CD8-positive, alpha-beta T cell (primary cell): ENCODE measurements at regions of chr11 and their contacts with region 1.

Region 1: GRCh38 chr11:12893787-12894672 is 115.1 kb upstream of the RASSF10 start:
- DNase-seq: peak in 8 of 9 experiments; percentile 13 to 55 (median 46)
- ATAC-seq: no peak
- H3K4me3 ChIP-seq: no peak overlapping the region
- H3K4me3 Mint-ChIP-seq: no peak overlapping the region
- H3K27ac ChIP-seq: no peak overlapping the region
- H3K27ac Mint-ChIP-seq: no peak overlapping the region
- H3K4me1 ChIP-seq: no peaks in the 10 kb centered on the region
- H3K4me1 Mint-ChIP-seq: no peaks in the 10 kb centered on the region
- H3K27me3 ChIP-seq: no peaks in the 10 kb centered on the region
- H3K27me3 Mint-ChIP-seq: peaks cover 15% of the 10 kb centered on the region
- CTCF ChIP-seq: peak; percentile 78

Region 2: DNA sequence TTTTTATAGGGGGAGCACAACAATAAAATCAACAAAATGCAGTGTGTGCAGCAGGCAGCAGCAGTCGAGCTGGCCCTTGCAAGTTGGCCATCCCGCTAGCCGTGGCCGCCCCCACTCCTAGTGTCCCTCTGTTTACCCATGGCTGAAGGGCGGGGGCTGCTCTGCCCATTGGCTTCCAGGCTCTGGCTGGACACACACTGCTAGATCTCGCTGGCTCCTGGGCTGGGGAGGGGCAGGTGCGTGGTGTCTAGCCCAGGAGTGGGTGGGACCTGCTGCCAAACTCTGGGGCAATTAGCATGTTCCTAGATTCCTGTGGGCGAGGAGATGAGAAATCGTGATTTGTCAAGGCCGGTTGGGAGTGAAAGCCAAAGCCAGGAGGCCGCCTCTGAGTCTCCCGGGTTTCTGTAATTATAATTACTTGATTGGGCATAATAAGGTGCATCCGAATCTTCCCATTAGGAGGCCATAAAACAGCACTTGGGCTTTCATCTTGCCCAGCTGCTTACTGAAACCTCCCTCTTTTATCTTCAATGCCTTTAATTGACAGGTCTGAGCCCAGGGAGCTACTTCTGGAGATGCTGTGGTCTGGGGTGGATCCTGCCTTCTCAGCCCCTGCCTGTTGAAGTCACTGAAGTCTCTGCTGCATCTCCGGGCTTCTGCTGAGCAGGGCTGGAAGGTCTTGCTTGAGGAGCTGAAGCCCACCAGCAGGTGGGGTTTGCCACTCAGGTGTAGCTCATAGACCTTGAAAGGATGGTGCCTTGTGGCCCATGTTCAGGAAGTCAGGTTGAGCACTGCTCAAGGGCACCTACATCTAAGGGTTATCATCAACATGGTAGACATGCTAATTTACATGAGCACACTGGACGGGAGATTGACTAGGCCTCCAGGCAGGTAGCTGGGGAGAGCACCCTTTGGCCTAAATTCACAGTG is 841.1 kb before region 1 on chr11:
- CTCF ChIA-PET with region 1: interaction called, 3 read pairs
- POLR2A ChIA-PET with region 1: no interaction called
- intact Hi-C with region 1: loop called in 1 of 2 experiments (anchors 5 kb)
- DNase-seq: peak in 4 of 9 experiments; percentile 28 to 48 (median 38)
- ATAC-seq: no peak
- H3K4me3 ChIP-seq: no peak overlapping the region
- H3K4me3 Mint-ChIP-seq: no peak overlapping the region
- H3K27ac ChIP-seq: no peak overlapping the region
- H3K27ac Mint-ChIP-seq: no peak overlapping the region
- H3K4me1 ChIP-seq: no peaks in the 10 kb centered on the region
- H3K4me1 Mint-ChIP-seq: no peaks in the 10 kb centered on the region
- H3K27me3 ChIP-seq: no peaks in the 10 kb centered on the region
- H3K27me3 Mint-ChIP-seq: no peaks in the 10 kb centered on the region
- CTCF ChIP-seq: no peak

Region 3: GRCh38 chr11:12288212-12288930 is 605.7 kb before region 1 on chr11:
- CTCF ChIA-PET with region 1: interaction called, 8 read pairs
- POLR2A ChIA-PET with region 1: no interaction called
- intact Hi-C with region 1: loop called in 1 of 2 experiments (anchors 2 kb)
- DNase-seq: peak in 8 of 9 experiments; percentile 21 to 59 (median 47)
- ATAC-seq: no peak
- H3K4me3 ChIP-seq: no peak overlapping the region
- H3K4me3 Mint-ChIP-seq: no peak overlapping the region
- H3K27ac ChIP-seq: no peak overlapping the region
- H3K27ac Mint-ChIP-seq: no peak overlapping the region
- H3K4me1 ChIP-seq: peaks cover 8% of the 10 kb centered on the region
- H3K4me1 Mint-ChIP-seq: peaks cover 7% of the 10 kb centered on the region
- H3K27me3 ChIP-seq: no peaks in the 10 kb centered on the region
- H3K27me3 Mint-ChIP-seq: no peaks in the 10 kb centered on the region
- CTCF ChIP-seq: peak; percentile 59

Region 4: DNA sequence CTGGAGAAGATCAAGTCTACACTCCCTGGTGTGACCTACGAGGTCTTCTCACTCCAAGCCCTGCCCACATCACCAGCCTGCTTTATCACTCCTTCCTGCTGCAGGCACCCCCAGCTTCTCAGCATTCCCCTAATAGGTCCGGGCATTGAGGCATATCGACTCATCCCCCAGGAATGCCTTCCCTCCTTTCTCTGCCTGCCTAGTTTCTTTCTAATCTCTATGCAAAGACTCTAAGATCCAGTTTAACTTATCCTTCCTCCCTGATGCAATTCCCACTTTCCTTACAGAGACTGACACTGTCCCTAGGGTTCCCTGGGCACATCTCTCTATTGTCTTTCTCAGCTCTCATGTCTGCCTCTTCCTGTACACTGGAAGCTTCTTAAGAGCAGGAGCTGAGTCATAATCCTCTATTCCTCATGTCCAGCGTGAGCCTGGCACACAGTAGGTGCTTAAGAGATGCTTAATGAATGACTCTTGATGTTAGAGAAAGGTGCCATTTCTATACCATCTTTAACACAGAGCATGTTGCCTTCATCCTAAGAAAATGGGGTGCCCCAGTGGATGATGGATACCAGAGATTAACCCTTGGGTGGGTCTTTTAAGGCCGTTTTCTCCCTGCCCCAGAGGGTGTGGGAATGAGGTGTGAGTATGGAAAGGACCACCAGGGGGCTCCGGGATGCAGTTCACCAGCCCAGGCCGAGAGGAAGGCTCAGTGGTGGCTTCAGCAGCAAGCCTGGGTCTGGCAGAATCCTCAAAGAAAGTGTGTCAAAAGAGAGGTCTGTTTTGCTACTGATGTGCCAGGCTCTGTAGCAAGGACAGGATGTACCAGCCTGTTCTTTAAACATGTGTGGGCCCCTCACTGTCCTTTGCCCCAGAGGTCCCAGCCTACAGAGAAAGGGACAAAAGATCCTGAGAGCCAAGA is 482.0 kb before region 1 on chr11:
- CTCF ChIA-PET with region 1: interaction called, 5 read pairs
- POLR2A ChIA-PET with region 1: no interaction called
- intact Hi-C with region 1: loop called in 1 of 2 experiments (anchors 5 kb)
- DNase-seq: peak in 5 of 9 experiments; percentile 13 to 39 (median 21)
- ATAC-seq: no peak
- H3K4me3 ChIP-seq: no peak overlapping the region
- H3K4me3 Mint-ChIP-seq: no peak overlapping the region
- H3K27ac ChIP-seq: no peak overlapping the region
- H3K27ac Mint-ChIP-seq: no peak overlapping the region
- H3K4me1 ChIP-seq: no peaks in the 10 kb centered on the region
- H3K4me1 Mint-ChIP-seq: no peaks in the 10 kb centered on the region
- H3K27me3 ChIP-seq: no peaks in the 10 kb centered on the region
- H3K27me3 Mint-ChIP-seq: peaks cover 6% of the 10 kb centered on the region
- CTCF ChIP-seq: peak; percentile 32